OCI-LY7 (cell line): ENCODE measurements at regions of chr9 and their contacts with region 1.

Region 1: DNA sequence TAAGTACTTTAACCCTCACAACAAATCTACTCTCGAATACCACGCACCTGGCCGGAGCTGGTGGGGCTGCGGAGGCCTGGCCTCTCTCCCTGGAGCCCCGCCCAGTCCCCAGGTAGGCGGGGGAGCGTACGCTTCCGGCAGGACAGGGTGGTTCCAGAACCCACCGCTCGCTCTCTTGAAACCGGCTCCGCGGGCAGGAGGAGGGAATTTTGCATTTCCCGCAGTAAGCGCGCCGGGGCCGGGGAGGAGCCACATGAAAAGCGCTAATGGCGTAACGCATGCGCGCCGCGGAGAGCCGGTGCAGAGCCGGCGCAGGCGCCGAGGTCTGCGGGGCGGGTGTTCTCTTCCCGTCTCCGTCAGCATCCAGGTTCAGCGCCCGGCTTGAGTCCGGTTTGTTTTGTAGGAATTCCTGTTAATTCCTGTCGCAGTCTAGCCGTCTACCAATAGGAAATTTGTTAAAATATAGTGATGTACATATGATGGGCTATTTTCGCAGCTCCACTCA is 20.8 kb downstream of the CAVIN4 start:
- DNase-seq: peak; percentile 74
- H3K4me3 ChIP-seq: peak overlapping the region; percentile 60
- H3K27ac ChIP-seq: no peak overlapping the region
- H3K4me1 ChIP-seq: peaks cover 13% of the 10 kb centered on the region
- CTCF ChIP-seq: no peak

Region 2: GRCh38 chr9:99807276-99807852 is 791.3 kb before region 1 on chr9:
- CTCF ChIA-PET with region 1: no interaction called
- POLR2A ChIA-PET with region 1: no interaction called
- intact Hi-C with region 1: loop called (anchors 5 kb)
- DNase-seq: peak; percentile 70
- H3K4me3 ChIP-seq: no peak overlapping the region
- H3K27ac ChIP-seq: no peak overlapping the region
- H3K4me1 ChIP-seq: no peaks in the 10 kb centered on the region
- CTCF ChIP-seq: peak; percentile 95

Region 3: GRCh38 chr9:100222674-100223073 is 376.0 kb before region 1 on chr9:
- CTCF ChIA-PET with region 1: no interaction called
- POLR2A ChIA-PET with region 1: interaction called, 5 read pairs
- intact Hi-C with region 1: loop called (anchors 10 kb)
- DNase-seq: peak; percentile 58
- H3K4me3 ChIP-seq: no peak overlapping the region
- H3K27ac ChIP-seq: no peak overlapping the region
- H3K4me1 ChIP-seq: peaks cover 10% of the 10 kb centered on the region
- CTCF ChIP-seq: peak; percentile 83

Region 4: DNA sequence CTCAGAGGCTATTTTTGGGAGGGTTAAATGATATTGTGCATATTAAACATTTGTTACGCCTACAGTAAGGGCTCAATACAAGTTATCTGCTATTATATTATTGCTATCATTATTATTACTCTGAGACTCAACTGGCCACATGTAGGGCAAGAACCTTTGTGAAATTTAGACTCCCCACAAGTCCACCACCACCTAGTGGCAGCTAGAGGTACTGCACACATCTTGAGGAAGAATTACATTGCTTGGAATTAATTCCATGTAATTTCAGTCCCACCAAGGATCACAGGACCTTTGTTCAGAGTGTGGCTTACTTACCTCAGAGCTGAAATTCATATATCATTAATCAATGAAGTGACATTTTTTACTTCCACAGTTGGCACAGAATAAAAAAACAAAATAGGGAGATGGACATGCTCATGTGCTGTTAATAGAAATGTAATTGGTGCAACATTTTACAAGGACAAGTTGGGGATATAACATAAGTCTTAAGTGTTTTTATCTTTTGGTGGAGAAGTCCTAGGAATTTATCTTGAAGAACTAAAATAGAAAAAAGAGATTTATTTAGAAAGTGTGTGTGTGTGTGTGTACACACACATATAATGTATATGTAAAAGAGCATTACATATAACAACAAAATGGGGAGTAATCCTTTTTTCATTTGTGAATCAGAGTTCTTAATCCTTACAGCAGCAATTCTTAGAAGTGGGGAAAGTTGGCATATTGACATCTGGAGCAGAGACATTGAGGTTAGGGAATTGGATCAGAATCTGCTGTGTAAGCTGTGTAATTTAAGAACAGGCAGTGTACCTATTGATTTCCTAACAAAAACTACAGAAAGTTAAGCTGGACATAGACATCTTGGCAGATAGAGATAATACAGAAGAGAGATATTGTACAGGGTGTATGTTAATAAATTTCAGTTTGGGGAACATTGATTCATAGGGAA is 160.6 kb before region 1 on chr9:
- CTCF ChIA-PET with region 1: no interaction called
- POLR2A ChIA-PET with region 1: no interaction called
- intact Hi-C with region 1: loop called (anchors 10 kb)
- DNase-seq: peak; percentile 76
- H3K4me3 ChIP-seq: no peak overlapping the region
- H3K27ac ChIP-seq: no peak overlapping the region
- H3K4me1 ChIP-seq: no peaks in the 10 kb centered on the region
- CTCF ChIP-seq: peak; percentile 97

Region 5: DNA sequence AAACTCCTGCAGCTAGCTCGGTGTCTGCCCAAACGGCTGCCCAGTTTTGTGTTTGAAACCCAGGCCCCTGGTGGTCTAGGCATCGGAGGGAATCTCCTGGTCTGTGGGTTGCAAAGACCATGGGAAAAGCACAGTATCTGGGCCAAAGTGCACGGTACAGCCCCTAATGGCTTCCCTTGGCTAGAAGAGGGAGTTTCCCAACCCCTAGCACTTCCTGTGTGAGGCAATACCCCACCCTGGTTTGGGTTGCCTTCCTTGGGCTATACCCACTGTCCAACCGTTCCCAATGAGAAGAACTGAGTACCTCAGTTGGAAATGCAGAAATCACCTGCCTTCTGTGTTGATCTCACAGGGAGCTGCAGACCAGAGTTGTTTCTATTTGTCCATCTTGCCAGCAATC is 21.0 kb after region 1 on chr9:
- CTCF ChIA-PET with region 1: no interaction called
- POLR2A ChIA-PET with region 1: no interaction called
- intact Hi-C with region 1: no loop called
- DNase-seq: no peak
- H3K4me3 ChIP-seq: no peak overlapping the region
- H3K27ac ChIP-seq: no peak overlapping the region
- H3K4me1 ChIP-seq: no peaks in the 10 kb centered on the region
- CTCF ChIP-seq: no peak

Region 6: DNA sequence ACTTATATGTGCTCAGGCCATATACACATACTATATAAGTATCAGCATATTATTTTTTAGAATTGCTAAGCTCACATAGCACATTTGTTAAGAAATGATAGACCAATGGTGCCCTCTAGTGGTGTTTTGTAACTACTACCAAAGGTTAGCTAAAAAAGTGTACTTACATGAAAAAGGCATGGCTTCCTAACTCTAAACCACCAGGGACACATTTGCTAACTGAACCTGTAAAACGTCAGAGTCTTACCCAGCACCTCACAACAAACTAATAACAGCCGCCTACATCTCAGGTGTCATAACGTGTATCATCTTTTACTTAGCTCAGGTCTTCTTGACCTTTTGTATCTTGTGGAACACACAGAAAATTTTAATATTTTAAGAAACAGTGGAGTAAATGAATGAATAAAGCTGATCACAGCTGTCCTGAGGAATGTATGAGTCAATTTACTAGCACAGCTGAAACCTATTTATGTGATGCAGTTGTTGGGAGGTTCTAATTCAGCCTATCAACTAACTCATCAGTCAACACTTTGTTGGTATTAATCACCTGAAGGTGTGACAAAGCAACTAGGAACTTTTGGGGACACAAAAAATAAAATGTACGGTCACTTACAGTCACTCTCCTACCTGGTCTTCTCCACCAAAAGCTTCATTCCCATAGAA is 713.2 kb after region 1 on chr9:
- CTCF ChIA-PET with region 1: no interaction called
- POLR2A ChIA-PET with region 1: no interaction called
- intact Hi-C with region 1: loop called (anchors 5 kb)
- DNase-seq: peak; percentile 85
- H3K4me3 ChIP-seq: no peak overlapping the region
- H3K27ac ChIP-seq: no peak overlapping the region
- H3K4me1 ChIP-seq: no peaks in the 10 kb centered on the region
- CTCF ChIP-seq: peak; percentile 89